Motor neuron (in vitro differentiated cells): ENCODE measurements at regions of chr22 and their contacts with region 1.

Region 1: DNA sequence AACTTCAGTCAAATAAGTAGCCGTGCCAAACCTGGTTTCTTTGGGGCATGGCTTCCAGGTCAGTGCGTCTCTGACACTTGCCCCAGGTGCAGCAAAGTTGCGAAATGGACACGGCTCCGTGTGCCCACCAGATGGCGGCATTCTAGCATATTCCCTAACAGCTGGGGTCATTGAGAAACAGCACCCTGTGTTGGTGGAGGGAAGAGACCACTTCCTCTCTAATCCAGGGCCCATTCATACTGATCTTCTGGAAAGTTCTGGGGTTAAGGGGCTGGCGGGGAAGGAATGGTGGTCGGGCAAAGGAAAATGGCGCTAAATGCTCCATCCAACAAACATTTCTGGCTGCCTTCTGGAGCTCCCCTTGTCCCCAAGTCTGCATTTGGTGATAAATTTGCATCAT is 141.2 kb upstream of the TIMP3 start:
- ATAC-seq: peak in 7 of 8 experiments; percentile 24 to 61 (median 49)
- H3K4me3 ChIP-seq: no peak overlapping the region
- H3K27ac ChIP-seq: no peak overlapping the region
- H3K4me1 ChIP-seq: peaks cover 0 to 4% of the 10 kb centered on the region in 2 donors

Region 2: DNA sequence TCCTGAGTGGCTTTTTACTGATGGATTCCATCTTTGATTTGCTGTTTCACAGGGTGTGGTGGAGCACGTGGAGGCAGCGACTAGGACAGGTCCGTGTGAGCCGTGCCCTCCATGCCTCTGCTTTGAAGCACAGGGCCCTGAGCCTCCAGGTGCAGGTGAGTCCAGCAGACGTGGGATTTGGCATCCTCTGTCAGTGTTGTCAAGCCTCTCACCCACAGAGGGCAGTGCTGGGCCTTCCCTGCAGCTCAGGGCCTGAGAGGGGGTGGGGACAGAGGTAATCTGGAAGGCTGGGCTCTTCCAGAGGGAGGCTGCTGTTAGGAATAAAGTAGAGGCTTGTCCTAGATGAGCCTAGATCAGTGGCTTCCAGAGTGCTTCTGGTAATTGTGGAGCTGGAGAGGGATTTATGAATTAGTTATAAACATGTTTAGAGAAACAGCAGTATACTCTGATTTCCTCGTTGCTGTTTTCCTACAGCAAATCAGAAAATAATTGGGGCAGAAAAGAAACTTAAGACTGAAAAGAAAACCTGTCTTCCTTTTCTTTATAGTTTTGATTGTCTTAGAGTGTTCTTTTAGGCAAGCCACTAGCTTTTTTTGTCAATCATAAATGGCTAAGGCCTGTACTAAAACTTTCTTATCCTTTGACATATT is 1098.9 kb before region 1 on chr22:
- in situ Hi-C with region 1: no loop called
- ATAC-seq: peak; percentile 90 to 100 (median 98)
- H3K4me3 ChIP-seq: no peak overlapping the region
- H3K27ac ChIP-seq: no peak overlapping the region
- H3K4me1 ChIP-seq: no peaks in the 10 kb centered on the region

Region 3: DNA sequence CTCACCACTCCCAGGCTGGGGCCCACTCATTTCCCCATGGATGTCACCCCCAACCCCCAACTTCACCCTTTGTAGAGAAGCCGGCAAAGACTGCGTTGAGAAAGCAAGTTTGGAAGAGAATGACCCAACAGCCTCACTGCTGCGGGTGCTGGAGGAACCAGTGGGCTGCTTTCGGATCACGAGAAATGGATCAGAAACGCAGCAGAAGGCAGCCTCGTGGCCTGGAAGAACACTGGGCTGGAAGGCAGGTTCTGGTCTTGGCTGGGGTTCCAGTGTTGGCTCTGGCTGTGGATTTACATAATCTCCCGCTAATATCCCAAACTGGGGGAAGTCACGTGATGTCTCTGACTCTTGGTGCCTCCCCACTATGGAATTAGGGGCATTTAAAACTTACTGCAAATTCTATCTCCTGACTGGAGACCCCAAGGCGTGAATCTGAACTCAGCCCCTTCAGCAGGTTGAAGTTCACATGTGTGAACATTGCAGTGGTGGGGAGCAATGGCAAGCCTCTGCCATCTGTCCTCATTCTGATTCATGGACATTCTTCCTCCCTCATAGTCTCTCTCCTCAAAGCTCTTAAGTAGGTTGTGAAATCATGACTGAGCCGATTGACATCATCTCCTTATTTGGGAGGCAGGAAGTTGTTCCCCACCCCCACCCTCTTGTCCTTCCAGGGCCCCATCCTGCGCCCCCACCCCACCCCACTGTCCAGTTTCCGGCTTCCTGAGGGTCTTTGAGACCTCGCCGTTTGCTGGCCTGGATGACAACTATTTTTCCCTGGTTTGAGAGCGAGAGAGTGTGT is 104.2 kb after region 1 on chr22:
- in situ Hi-C with region 1: loop called in 1 of 9 experiments (anchors 25 kb)
- ATAC-seq: peak in 3 of 8 experiments; percentile 23 to 55 (median 29)
- H3K4me3 ChIP-seq: no peak overlapping the region
- H3K27ac ChIP-seq: no peak overlapping the region
- H3K4me1 ChIP-seq: no peaks in the 10 kb centered on the region